ENCODE measurements at regions of chr11 and their contacts with region 1.

Region 1: GRCh38 chr11:73242251-73243079 is 24.4 kb downstream of the P2RY2 start:
- DNase-seq: peak; percentile 68 to 87 (median 78)
- ATAC-seq: peak; percentile 35 to 52 (median 46)
- H3K4me3 ChIP-seq: peak overlapping the region in 8 of 12 donors; percentile 11 to 41 (median 20)
- H3K27ac ChIP-seq: peak overlapping the region in 7 of 12 donors; percentile 14 to 86 (median 60)
- H3K4me1 ChIP-seq: peaks cover 12 to 60% (median 46%) of the 10 kb centered on the region in 12 donors
- H3K27me3 ChIP-seq: no peaks in the 10 kb centered on the region
- CTCF ChIP-seq: peak; percentile 80 to 96 (median 90)
- POLR2A ChIP-seq: no peak

Region 2: DNA sequence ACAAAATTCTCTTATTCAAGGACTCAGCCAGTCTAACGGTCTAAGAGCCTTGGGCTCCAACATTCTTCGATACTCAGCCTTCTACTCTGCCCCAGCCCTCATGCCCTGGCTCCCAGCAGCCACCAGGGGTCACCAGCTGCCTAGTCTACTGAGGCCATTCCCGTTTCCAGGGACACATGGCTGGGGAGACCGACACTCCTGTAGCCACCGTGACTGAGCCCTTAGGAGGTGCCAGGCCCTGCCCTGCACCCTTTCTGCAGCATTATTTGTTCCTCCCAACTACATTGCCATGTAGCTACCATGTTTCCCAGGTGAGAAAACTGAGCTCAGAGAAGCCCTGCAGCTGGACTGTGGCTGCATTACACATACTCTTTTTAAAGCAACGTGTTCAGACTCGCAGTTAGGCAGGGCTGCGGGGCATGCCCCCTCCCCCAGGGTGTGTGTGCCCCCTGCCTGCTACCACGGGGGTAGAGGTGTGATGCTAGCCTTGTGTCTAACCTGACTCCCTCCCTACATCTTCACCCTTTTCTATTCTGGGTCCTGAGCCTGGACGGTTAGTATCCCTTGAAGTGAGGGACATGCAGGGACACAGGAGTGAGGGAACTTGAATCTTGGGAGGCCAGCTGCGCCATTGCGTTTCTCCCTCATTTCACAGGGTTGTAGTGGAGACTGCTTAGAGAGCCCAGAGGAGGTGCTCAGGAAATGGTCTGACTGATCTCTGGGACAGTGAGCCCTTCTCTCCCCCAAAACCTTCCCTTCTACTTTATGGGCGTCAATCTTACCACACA is 410.8 kb before region 1 on chr11:
- intact Hi-C with region 1: loop called (anchors 1 to 5 kb)
- DNase-seq: peak; percentile 85 to 91 (median 88)
- ATAC-seq: peak; percentile 73 to 81 (median 76)
- H3K4me3 ChIP-seq: no peak overlapping the region
- H3K27ac ChIP-seq: peak overlapping the region; percentile 80 to 98 (median 90)
- H3K4me1 ChIP-seq: peaks cover 39 to 85% (median 61%) of the 10 kb centered on the region in 12 donors
- H3K27me3 ChIP-seq: no peaks in the 10 kb centered on the region
- CTCF ChIP-seq: peak; percentile 91 to 99 (median 97)
- POLR2A ChIP-seq: no peak

Region 3: DNA sequence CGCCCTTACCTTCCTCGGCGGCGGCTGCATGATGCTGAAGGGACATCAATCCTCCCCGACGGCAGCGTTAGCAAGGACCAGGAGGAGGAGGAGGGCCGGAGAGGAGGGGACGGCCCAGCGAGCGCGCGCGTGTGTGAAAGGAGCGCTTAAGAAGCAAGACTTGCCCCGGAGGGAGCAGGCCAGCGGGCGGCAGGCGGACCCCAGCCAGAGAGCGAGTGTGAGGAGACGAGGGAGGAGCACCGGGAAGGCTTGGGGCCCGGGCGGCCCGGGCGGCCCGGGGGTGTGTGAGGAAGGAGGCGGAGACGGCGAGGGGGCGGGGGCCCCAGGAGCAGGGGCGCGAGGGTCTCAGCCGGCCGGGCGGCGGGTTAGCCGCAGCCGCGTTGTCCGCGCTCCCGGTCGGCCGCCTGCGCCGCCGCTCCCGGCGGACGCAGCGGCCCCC is 100.6 kb before region 1 on chr11:
- intact Hi-C with region 1: loop called in 1 of 10 experiments (anchors 2 kb)
- DNase-seq: peak; percentile 80 to 90 (median 84)
- ATAC-seq: peak in 3 of 4 donors; percentile 38 to 65 (median 53)
- H3K4me3 ChIP-seq: peak overlapping the region; percentile 65 to 97 (median 92)
- H3K27ac ChIP-seq: peak overlapping the region; percentile 91 to 99 (median 98)
- H3K4me1 ChIP-seq: peaks cover 2 to 66% (median 44%) of the 10 kb centered on the region in 12 donors
- H3K27me3 ChIP-seq: no peaks in the 10 kb centered on the region
- CTCF ChIP-seq: no peak
- POLR2A ChIP-seq: peak in 1 of 2 donors; percentile 48

Region 4: GRCh38 chr11:73218106-73218829 is 24.2 kb before region 1 on chr11 and contains the start of gene P2RY2:
- intact Hi-C with region 1: loop called in 1 of 10 experiments (anchors 2 kb)
- DNase-seq: peak; percentile 85 to 93 (median 90)
- ATAC-seq: peak; percentile 72 to 90 (median 87)
- H3K4me3 ChIP-seq: peak within 1 kb of the TSS; percentile 47 to 70 (median 60)
- H3K27ac ChIP-seq: peak within 1 kb of the TSS; percentile 33 to 91 (median 84)
- H3K4me1 ChIP-seq: peaks cover 0 to 53% (median 26%) of the 10 kb centered on the region in 12 donors
- H3K27me3 ChIP-seq: no peaks in the 10 kb centered on the region
- CTCF ChIP-seq: peak; percentile 35 to 77 (median 58)
- POLR2A ChIP-seq: peak in 1 of 2 donors; percentile 51
- total RNA-seq, gene P2RY2: 10.2 to 28.3 (median 14.7) TPM

Region 5: DNA sequence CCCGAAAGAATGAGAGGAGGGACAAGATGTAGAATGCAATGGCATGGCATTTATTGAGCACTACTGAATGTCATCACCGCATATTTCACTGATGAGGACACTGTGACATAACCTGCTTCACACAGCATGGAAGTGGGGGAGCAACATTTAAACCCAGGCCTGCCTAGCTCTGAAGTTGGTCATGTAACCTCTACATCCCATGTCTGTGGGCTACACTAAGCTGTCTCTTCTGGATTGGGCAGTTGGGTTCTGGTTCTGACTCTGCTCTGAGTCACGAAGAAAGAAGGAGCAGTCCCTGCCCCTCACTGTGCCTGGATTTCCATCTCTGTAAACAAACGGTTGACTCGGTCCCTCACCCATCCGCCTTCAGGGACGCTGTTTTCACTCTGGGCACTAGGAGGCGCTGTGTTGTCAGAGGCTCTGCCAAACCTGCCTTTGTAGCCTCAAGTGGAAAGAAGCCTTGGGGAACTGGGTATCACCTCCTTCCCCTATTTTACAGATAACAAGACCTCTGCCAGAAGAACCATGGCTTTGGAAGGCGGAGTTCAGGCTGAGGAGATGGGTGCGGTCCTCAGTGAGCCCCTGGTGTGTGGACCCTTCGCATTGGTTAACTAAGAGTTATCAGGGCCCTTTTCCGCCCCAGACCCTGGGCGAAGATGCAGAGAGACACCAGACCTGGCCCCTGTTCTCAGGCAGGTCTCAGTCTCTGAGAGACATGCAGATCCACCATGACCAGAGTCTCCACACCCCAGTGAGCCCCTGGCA is 52.9 kb after region 1 on chr11:
- intact Hi-C with region 1: loop called in 1 of 10 experiments (anchors 10 kb)
- DNase-seq: peak; percentile 60 to 81 (median 68)
- ATAC-seq: peak in 3 of 4 donors; percentile 26 to 54 (median 39)
- H3K4me3 ChIP-seq: no peak overlapping the region
- H3K27ac ChIP-seq: no peak overlapping the region
- H3K4me1 ChIP-seq: peaks cover 0 to 23% (median 3%) of the 10 kb centered on the region in 12 donors
- H3K27me3 ChIP-seq: no peaks in the 10 kb centered on the region
- CTCF ChIP-seq: peak; percentile 72 to 90 (median 86)
- POLR2A ChIP-seq: no peak